ENCODE measurements at regions of chr11 and their contacts with region 1.

Region 1: DNA sequence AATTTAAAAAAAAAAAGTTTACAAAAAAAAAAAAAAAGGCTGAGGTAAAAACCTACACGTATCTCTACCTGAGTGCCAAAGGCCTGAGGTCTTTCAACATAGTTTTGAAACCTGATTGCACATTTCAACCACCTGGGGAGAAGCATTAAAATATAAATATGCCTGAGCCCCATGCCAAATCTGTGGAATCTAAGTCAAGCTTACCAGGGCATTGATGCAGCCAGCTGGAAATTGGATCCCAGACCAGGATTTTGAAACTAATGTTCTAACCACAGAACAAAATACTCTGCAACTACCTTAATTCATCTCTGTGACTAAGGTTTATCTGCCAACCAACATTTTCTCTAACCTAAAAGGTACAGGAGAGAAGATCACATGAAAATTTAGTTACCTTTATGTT is 38.8 kb upstream of the CHRNA10 start:
- DNase-seq: no peak
- H3K4me3 Mint-ChIP-seq: no peak overlapping the region
- H3K27ac Mint-ChIP-seq: no peak overlapping the region
- H3K4me1 Mint-ChIP-seq: peaks cover 7% of the 10 kb centered on the region
- H3K27me3 Mint-ChIP-seq: no peaks in the 10 kb centered on the region

Region 2: DNA sequence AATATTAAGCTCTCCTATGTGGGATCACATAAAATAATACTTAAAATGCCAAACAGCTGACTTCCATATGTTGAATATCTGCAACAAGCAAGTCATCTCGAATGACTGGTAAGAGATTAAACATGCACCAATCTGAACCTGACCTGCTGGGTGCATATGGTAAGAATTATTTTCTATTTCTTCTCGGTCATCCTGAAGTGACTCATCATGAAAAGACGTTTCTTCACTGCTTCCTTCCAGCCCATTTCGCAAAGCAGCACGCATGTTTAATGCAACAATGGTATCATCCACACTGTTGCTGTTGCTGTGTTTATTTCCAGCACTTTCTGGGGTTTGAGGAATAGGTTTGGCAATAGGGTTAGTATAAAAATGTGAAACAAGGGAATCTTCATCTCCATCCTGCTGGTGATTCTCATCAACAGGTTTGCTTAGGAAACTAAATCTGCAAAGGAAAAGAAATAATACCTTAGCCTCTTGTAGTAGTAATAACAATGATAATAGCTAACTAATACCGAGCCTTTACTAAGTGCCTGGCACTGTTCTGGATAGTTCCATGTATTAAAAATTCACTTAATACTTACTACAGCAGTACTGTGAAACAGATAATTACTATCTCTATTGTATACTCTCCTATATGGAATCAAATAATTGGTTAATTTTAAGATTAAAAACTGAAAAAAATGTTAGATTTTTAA is 13.2 kb after region 1 on chr11:
- intact Hi-C with region 1: loop called (anchors 2 kb)
- DNase-seq: no peak
- H3K4me3 Mint-ChIP-seq: no peak overlapping the region
- H3K27ac Mint-ChIP-seq: no peak overlapping the region
- H3K4me1 Mint-ChIP-seq: peaks cover 6% of the 10 kb centered on the region
- H3K27me3 Mint-ChIP-seq: no peaks in the 10 kb centered on the region

Region 3: GRCh38 chr11:4118107-4118506 is 408.1 kb after region 1 on chr11:
- intact Hi-C with region 1: loop called (anchors 10 kb)
- DNase-seq: no peak
- H3K4me3 Mint-ChIP-seq: no peak overlapping the region
- H3K27ac Mint-ChIP-seq: peak overlapping the region; percentile 63
- H3K4me1 Mint-ChIP-seq: peaks cover 21% of the 10 kb centered on the region
- H3K27me3 Mint-ChIP-seq: no peaks in the 10 kb centered on the region